Heart right ventricle (tissue), 16 donors: ENCODE measurements at regions of chr6 and their contacts with region 1.

Region 1: GRCh38 chr6:50816115-50816675 is 2.5 kb upstream of the TFAP2B start:
- DNase-seq: peak; percentile 42 to 43
- ATAC-seq: peak in 2 of 8 donors; percentile 50 to 57
- H3K4me3 ChIP-seq: peak overlapping the region in 7 of 10 donors; percentile 10 to 48 (median 37)
- H3K27ac ChIP-seq: no peak overlapping the region
- H3K4me1 ChIP-seq: peaks cover 0 to 27% (median 7%) of the 10 kb centered on the region in 9 donors
- H3K27me3 ChIP-seq: peaks cover 20 to 90% (median 85%) of the 10 kb centered on the region in 7 donors
- CTCF ChIP-seq: peak; percentile 56 to 88 (median 85)

Region 2: GRCh38 chr6:50591135-50591534 is 225.1 kb before region 1 on chr6:
- intact Hi-C with region 1: no loop called
- DNase-seq: no peak
- ATAC-seq: peak in 1 of 8 donors; percentile 47
- H3K4me3 ChIP-seq: no peak overlapping the region
- H3K27ac ChIP-seq: no peak overlapping the region
- H3K4me1 ChIP-seq: no peaks in the 10 kb centered on the region
- H3K27me3 ChIP-seq: no peaks in the 10 kb centered on the region
- CTCF ChIP-seq: no peak

Region 3: GRCh38 chr6:50699051-50699775 is 117.0 kb before region 1 on chr6:
- intact Hi-C with region 1: no loop called
- DNase-seq: no peak
- ATAC-seq: no peak
- H3K4me3 ChIP-seq: no peak overlapping the region
- H3K27ac ChIP-seq: no peak overlapping the region
- H3K4me1 ChIP-seq: no peaks in the 10 kb centered on the region
- H3K27me3 ChIP-seq: peaks cover 0 to 19% (median 3%) of the 10 kb centered on the region in 7 donors
- CTCF ChIP-seq: no peak

Region 4: GRCh38 chr6:50868466-50868865 is 52.3 kb after region 1 on chr6:
- intact Hi-C with region 1: no loop called
- DNase-seq: no peak
- ATAC-seq: no peak
- H3K4me3 ChIP-seq: no peak overlapping the region
- H3K27ac ChIP-seq: no peak overlapping the region
- H3K4me1 ChIP-seq: no peaks in the 10 kb centered on the region
- H3K27me3 ChIP-seq: peaks cover 0 to 15% (median 0%) of the 10 kb centered on the region in 7 donors
- CTCF ChIP-seq: no peak

Region 5: DNA sequence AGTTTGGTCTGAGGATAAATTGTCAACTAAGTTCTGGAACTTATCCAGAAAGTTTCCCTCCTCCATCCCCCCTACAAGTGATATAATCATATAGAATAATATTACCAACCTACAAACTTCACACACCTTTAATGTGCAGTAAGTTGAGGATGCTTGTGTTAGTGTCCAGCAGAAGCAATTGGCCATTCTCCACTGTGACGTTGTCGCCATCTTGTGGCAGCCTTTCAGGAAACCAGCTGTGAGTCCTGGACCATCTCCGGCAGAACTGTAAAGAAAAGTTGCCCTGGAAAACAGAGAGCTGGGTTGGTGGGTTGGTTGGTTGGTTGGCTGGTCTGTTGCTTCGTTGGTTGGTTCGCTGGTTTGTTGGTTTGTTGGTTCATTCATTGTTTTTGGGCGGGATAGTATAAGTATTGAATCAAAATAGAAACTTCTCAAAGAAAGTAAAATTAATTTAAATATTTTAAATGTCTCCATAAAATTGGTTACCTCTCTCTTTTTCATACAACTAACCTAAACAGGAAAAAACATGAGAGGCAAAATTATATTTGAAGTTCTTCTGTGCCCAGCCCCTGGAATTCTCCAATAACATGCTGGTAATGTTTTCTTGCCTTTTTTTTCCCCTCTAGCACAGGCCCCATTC is 1143.7 kb after region 1 on chr6:
- intact Hi-C with region 1: loop called in 8 of 10 experiments (anchors 5 to 10 kb)
- DNase-seq: peak; percentile 31 to 48
- ATAC-seq: peak in 1 of 8 donors; percentile 52
- H3K4me3 ChIP-seq: no peak overlapping the region
- H3K27ac ChIP-seq: no peak overlapping the region
- H3K4me1 ChIP-seq: no peaks in the 10 kb centered on the region
- H3K27me3 ChIP-seq: peaks cover 0 to 31% (median 12%) of the 10 kb centered on the region in 7 donors
- CTCF ChIP-seq: peak; percentile 21 to 74 (median 63)

Region 6: GRCh38 chr6:52020945-52021570 is 1204.9 kb after region 1 on chr6:
- intact Hi-C with region 1: loop called in 6 of 10 experiments (anchors 2 to 10 kb)
- DNase-seq: no peak
- ATAC-seq: no peak
- H3K4me3 ChIP-seq: no peak overlapping the region
- H3K27ac ChIP-seq: no peak overlapping the region
- H3K4me1 ChIP-seq: no peaks in the 10 kb centered on the region
- H3K27me3 ChIP-seq: peaks cover 0 to 29% (median 5%) of the 10 kb centered on the region in 7 donors
- CTCF ChIP-seq: peak; percentile 59 to 85 (median 79)

Region 7: GRCh38 chr6:52263709-52264540 is 1447.7 kb after region 1 on chr6:
- intact Hi-C with region 1: loop called in 1 of 10 experiments (anchors 10 kb)
- DNase-seq: peak; percentile 33 to 49
- ATAC-seq: peak in 6 of 8 donors; percentile 56 to 72 (median 65)
- H3K4me3 ChIP-seq: no peak overlapping the region
- H3K27ac ChIP-seq: no peak overlapping the region
- H3K4me1 ChIP-seq: no peaks in the 10 kb centered on the region
- H3K27me3 ChIP-seq: no peaks in the 10 kb centered on the region
- CTCF ChIP-seq: peak; percentile 76 to 96 (median 92)